ENCODE measurements at regions of chr3 and their contacts with region 1.

Region 1: DNA sequence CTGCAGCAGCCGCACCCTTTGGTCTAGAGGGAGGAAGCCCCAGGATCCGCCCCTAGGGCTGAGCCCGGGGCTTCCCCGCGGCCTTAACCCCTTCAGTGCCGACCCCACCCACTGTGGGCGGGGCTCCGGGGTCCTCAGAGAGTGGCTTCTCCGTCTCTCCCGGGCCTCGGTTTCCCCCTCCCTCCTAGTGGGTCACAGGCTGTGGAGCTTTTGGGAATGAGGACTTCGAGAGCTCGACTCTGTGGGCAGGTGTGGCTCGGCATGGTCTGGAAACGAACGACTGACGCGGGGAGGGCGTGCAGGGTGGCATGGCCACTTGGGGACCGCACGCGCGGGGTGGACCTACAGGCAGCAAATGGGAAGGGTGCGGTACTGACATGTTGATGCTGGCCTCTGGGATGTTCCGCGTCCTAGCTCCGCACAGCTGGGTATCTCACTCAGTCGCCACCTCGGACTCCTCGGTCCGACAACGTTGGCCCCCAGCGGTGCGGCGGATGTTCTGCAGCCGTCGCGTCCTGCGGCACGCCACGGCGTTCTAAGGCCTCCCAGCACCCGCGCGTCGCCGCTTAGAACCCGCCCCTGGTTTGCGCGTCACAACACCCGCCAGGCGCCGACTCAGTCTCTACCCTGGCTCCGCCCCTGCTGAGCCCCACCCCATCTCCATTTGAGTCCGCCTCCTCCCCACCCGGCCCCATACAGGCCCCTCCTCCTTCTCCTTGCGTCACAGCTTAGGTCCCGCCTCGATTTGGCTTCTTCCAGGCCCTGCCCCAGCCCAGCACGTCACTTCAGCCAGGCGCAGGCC is at the starts of genes HYAL3 and NAA80:
- DNase-seq: peak; percentile 100
- H3K4me3 ChIP-seq: peak within 1 kb of the TSS; percentile 60 to 69 (median 63)
- H3K27ac ChIP-seq: peak within 1 kb of the TSS; percentile 88 to 89 (median 88)
- H3K4me1 ChIP-seq: peaks cover 4 to 45% (median 40%) of the 10 kb centered on the region in 4 donors
- H3K27me3 ChIP-seq: no peaks in the 10 kb centered on the region
- CTCF ChIP-seq: peak; percentile 28 to 58 (median 44)
- EP300 ChIP-seq: no peak
- POLR2A ChIP-seq: peak; percentile 83 to 96
- total RNA-seq, gene HYAL3: 2.1 to 8.3 (median 3.4) TPM
- total RNA-seq, gene NAA80: 3.6 to 9.4 (median 7.6) TPM

Region 2: GRCh38 chr3:49358217-49358883 is 940.7 kb before region 1 on chr3 and contains the start of gene GPX1:
- intact Hi-C with region 1: no loop called
- DNase-seq: peak; percentile 98
- H3K4me3 ChIP-seq: peak within 1 kb of the TSS; percentile 68 to 83 (median 76)
- H3K27ac ChIP-seq: peak within 1 kb of the TSS; percentile 89 to 95 (median 94)
- H3K4me1 ChIP-seq: peaks cover 0 to 34% (median 26%) of the 10 kb centered on the region in 4 donors
- H3K27me3 ChIP-seq: no peaks in the 10 kb centered on the region
- CTCF ChIP-seq: no peak
- EP300 ChIP-seq: peak in 1 of 4 donors; percentile 37
- POLR2A ChIP-seq: peak; percentile 90
- total RNA-seq, gene GPX1: 164 to 331 (median 268) TPM

Region 3: DNA sequence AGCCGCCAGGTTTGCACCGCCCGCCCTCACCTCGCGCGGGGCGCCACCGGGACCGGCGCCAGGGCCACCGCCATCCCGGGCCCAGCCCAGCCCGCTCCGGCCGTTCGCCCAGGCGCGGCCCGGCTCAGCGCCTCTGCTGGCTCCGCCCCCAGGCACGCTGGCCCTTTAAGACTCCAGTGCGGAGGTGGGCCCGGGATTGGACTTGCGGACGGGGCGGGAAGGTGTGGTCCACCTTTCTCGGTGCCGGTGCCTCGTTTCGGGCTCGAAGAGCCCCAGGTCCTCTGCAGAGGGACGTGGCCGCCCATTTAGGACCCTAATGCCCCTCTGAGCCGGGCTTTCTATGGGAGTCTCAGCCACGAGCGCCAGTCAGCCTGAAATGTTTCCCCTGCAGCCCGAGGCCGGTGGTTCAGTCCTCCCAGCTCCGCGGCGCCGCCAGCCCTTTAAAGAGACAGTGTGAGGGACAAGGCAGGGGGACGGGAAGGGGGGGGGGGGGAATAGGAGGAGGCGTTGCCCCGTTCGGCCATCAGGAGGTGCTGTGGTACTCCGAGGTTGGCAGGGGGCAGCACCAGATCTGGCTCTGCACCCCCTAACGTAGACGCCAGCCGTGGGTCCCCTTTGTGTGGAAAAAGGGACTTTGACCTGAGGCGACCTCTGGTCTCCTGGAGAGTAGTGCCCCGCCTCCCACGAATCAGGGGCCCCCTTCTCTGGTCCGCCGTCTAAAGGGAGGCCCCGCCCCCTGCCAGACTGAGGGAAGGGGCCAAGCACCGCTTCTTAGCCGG is 22.5 kb after region 1 on chr3:
- intact Hi-C with region 1: loop called (anchors 2 kb)
- DNase-seq: peak; percentile 95
- H3K4me3 ChIP-seq: peak overlapping the region; percentile 58 to 84 (median 75)
- H3K27ac ChIP-seq: peak overlapping the region; percentile 88 to 92 (median 92)
- H3K4me1 ChIP-seq: peaks cover 0 to 70% (median 59%) of the 10 kb centered on the region in 4 donors
- H3K27me3 ChIP-seq: no peaks in the 10 kb centered on the region
- CTCF ChIP-seq: peak; percentile 22 to 50 (median 42)
- EP300 ChIP-seq: no peak
- POLR2A ChIP-seq: no peak